ENCODE measurements at regions of chr1 and their contacts with region 1.

Region 1: GRCh38 chr1:159891275-159892157 is 8.4 kb downstream of the CFAP45 start:
- DNase-seq: peak; percentile 87
- H3K4me3 ChIP-seq: no peak overlapping the region; a peak in 1 of 4 replicates
- H3K27ac ChIP-seq: peak overlapping the region in 1 of 2 experiments; percentile 94; a peak in 2 of 4 replicates
- H3K4me1 ChIP-seq: peaks cover 13 to 29% of the 10 kb centered on the region in 2 experiments
- H3K27me3 ChIP-seq: no peaks in the 10 kb centered on the region
- CTCF ChIP-seq: peak; percentile 100
- EP300 ChIP-seq: no peak
- RAD21 ChIP-seq: peak; percentile 100

Region 2: GRCh38 chr1:159408862-159409400 is 482.6 kb before region 1 on chr1:
- CTCF ChIA-PET with region 1: no interaction called
- POLR2A ChIA-PET with region 1: no interaction called
- DNase-seq: no peak
- H3K4me3 ChIP-seq: no peak overlapping the region
- H3K27ac ChIP-seq: no peak overlapping the region
- H3K4me1 ChIP-seq: no peaks in the 10 kb centered on the region
- H3K27me3 ChIP-seq: no peaks in the 10 kb centered on the region
- CTCF ChIP-seq: no peak
- EP300 ChIP-seq: no peak
- RAD21 ChIP-seq: no peak

Region 3: GRCh38 chr1:159804924-159805323 is 86.6 kb before region 1 on chr1:
- CTCF ChIA-PET with region 1: interaction called, 533 read pairs
- POLR2A ChIA-PET with region 1: interaction called, 6 read pairs
- DNase-seq: no peak
- H3K4me3 ChIP-seq: no peak overlapping the region
- H3K27ac ChIP-seq: no peak overlapping the region
- H3K4me1 ChIP-seq: no peaks in the 10 kb centered on the region; a peak in 1 of 4 replicates
- H3K27me3 ChIP-seq: no peaks in the 10 kb centered on the region
- CTCF ChIP-seq: no peak
- EP300 ChIP-seq: 0 out of 4 replicates have a peak, but pooled peaks of 1 of the 2 experiments have one; percentile 10
- RAD21 ChIP-seq: no peak

Region 4: DNA sequence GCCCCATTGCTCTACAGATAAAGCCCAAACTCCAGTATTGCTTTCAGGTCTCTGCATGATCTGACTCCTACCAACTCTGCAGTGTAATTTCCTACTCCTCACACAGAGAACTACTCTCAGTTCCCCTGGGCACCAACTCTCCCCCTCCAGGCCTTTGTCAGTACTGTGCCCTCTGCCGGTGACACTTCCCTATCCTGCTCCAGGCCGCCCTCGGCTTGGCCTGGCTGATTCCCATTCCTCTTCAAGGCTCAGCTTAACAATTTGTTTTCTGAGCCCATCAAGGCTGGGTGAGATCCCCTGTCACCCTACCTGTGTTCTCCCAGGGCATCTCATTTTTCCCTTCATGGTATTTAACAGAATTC is 62.3 kb before region 1 on chr1:
- CTCF ChIA-PET with region 1: interaction called, 21 read pairs
- POLR2A ChIA-PET with region 1: no interaction called
- DNase-seq: peak; percentile 20
- H3K4me3 ChIP-seq: no peak overlapping the region
- H3K27ac ChIP-seq: no peak overlapping the region
- H3K4me1 ChIP-seq: peaks cover 13% of the 10 kb centered on the region in 2 experiments; a peak in 2 of 4 replicates
- H3K27me3 ChIP-seq: no peaks in the 10 kb centered on the region
- CTCF ChIP-seq: peak; percentile 24; the same call in 1 of the 2 replicates
- EP300 ChIP-seq: no peak
- RAD21 ChIP-seq: no peak

Region 5: GRCh38 chr1:159860426-159860825 is 31.1 kb before region 1 on chr1:
- CTCF ChIA-PET with region 1: interaction called, 14 read pairs
- POLR2A ChIA-PET with region 1: no interaction called
- DNase-seq: peak; percentile 75
- H3K4me3 ChIP-seq: no peak overlapping the region
- H3K27ac ChIP-seq: no peak overlapping the region
- H3K4me1 ChIP-seq: peaks cover 0 to 10% of the 10 kb centered on the region in 2 experiments; a peak in 1 of 4 replicates
- H3K27me3 ChIP-seq: no peaks in the 10 kb centered on the region
- CTCF ChIP-seq: no peak
- EP300 ChIP-seq: no peak
- RAD21 ChIP-seq: no peak

Region 6: GRCh38 chr1:159916184-159917051 is 24.9 kb after region 1 on chr1:
- CTCF ChIA-PET with region 1: interaction called, 19 read pairs
- POLR2A ChIA-PET with region 1: no interaction called
- DNase-seq: peak; percentile 58
- H3K4me3 ChIP-seq: no peak overlapping the region
- H3K27ac ChIP-seq: peak overlapping the region in 1 of 2 experiments; percentile 97; a peak in 2 of 4 replicates
- H3K4me1 ChIP-seq: peaks cover 14 to 64% of the 10 kb centered on the region in 2 experiments; a peak in 3 of 4 replicates
- H3K27me3 ChIP-seq: no peaks in the 10 kb centered on the region
- CTCF ChIP-seq: no peak
- EP300 ChIP-seq: peak in 1 of 2 experiments; percentile 38; a peak in 1 of 4 replicates
- RAD21 ChIP-seq: no peak

Region 7: DNA sequence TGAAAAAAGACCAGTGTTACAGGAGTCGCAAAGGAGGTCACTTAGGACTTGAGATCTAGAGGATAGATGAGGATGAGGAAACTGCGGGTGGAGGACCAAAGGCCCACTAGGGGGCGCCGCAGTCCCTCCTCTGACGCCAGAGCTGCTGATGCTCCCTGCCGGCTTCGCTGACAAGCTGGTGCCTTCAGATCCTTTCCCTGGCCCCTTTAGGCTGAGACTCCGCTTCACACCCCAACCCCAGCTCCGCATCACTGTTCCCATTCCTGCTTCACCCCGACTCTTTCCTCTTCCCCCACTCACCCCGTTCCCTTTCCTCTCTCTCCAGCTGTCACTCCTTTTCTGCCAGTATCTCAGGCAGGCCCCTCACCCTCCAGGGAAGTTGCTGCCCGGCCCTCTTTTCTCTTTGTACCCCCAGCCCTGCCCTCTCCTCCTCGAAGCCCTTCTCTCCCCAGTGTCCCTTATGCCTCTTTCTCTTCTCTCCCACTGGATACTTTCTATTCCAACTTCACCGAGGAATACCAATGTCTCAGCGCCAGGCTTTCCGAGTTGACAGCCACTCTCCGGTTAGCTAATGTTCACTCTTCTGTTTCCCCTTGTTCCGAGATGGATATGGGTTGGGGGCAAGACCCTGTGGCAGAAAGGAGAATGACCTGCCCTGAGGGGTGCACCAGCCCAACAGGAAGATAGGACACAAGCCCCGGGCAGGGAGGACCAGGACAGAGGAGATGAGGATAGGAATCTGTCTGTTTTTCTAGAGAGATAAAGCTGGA is 194.4 kb after region 1 on chr1:
- CTCF ChIA-PET with region 1: no interaction called
- POLR2A ChIA-PET with region 1: no interaction called
- DNase-seq: peak; percentile 91
- H3K4me3 ChIP-seq: no peak overlapping the region
- H3K27ac ChIP-seq: no peak overlapping the region
- H3K4me1 ChIP-seq: peaks cover 0 to 13% of the 10 kb centered on the region in 2 experiments; a peak in 1 of 4 replicates
- H3K27me3 ChIP-seq: peaks cover 22% of the 10 kb centered on the region; the same call in 1 of the 2 replicates
- CTCF ChIP-seq: peak; percentile 78
- EP300 ChIP-seq: no peak
- RAD21 ChIP-seq: peak; percentile 76

Region 8: GRCh38 chr1:160177231-160177630 is 285.7 kb after region 1 on chr1:
- CTCF ChIA-PET with region 1: no interaction called
- POLR2A ChIA-PET with region 1: no interaction called
- DNase-seq: no peak
- H3K4me3 ChIP-seq: no peak overlapping the region
- H3K27ac ChIP-seq: no peak overlapping the region
- H3K4me1 ChIP-seq: no peaks in the 10 kb centered on the region
- H3K27me3 ChIP-seq: no peaks in the 10 kb centered on the region; the same call in 1 of the 2 replicates
- CTCF ChIP-seq: no peak
- EP300 ChIP-seq: no peak
- RAD21 ChIP-seq: no peak